ENCODE measurements at regions of chr5 and their contacts with region 1.

Region 1: GRCh38 chr5:40171971-40172370 is 507.7 kb upstream of the PTGER4 start:
- DNase-seq: peak; percentile 94
- ATAC-seq: peak; percentile 84
- H3K4me3 ChIP-seq: no peak overlapping the region
- H3K27ac ChIP-seq: peak overlapping the region; percentile 74
- H3K4me1 ChIP-seq: peaks cover 23% of the 10 kb centered on the region
- H3K27me3 ChIP-seq: no peaks in the 10 kb centered on the region
- CTCF ChIP-seq: no peak

Region 2: DNA sequence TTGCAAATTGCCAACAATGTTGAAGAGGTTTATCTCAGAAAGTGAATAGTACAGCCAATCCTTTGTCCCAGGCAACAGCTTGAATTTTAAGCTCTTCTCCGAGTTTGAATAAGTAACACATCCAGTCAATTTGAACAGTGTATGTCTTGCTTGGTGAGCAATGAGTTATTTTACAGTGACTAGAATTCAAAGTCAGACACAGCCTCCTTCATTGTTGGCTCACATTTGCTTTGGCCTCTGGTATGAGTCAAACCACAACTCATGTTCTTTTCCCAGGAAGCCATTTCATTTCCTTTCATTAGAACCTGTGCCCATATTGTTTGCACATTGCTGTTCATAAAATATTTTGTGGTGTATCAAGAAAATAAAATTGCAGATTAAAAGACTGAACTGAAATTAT is 125.2 kb before region 1 on chr5:
- CTCF ChIA-PET with region 1: no interaction called
- POLR2A ChIA-PET with region 1: no interaction called
- intact Hi-C with region 1: loop called (anchors 5 kb)
- DNase-seq: peak; percentile 93
- ATAC-seq: peak; percentile 92
- H3K4me3 ChIP-seq: 0 out of 2 replicates have a peak overlapping the region, but pooled peaks have one; percentile 2
- H3K27ac ChIP-seq: peak overlapping the region; percentile 93
- H3K4me1 ChIP-seq: peaks cover 30% of the 10 kb centered on the region
- H3K27me3 ChIP-seq: no peaks in the 10 kb centered on the region
- CTCF ChIP-seq: no peak

Region 3: DNA sequence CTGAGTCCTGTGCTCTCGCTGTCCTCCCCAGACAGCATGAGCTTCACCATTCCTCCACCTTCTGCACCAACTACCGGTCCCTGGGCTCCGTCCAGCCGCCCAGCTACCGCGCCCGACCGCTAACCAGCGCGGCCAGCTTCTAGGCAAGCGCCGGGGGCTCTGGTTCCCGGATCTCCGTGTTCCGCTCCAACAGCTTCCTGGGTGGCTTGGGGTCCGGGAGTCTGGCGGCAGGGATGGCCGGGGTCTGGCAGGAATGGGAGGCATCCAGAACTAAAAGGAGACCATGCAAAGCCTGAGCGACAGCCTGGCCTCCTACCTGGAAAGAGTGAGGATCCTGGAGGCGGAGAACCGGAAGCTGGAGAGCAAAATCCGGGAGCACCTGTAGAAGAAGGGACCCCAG is 105.4 kb before region 1 on chr5:
- CTCF ChIA-PET with region 1: no interaction called
- POLR2A ChIA-PET with region 1: no interaction called
- intact Hi-C with region 1: no loop called
- DNase-seq: no peak
- ATAC-seq: no peak
- H3K4me3 ChIP-seq: no peak overlapping the region
- H3K27ac ChIP-seq: no peak overlapping the region
- H3K4me1 ChIP-seq: peaks cover 2% of the 10 kb centered on the region; the same call in 1 of the 2 replicates
- H3K27me3 ChIP-seq: no peaks in the 10 kb centered on the region
- CTCF ChIP-seq: no peak

Region 4: GRCh38 chr5:40124367-40124766 is 47.6 kb before region 1 on chr5:
- CTCF ChIA-PET with region 1: interaction called, 14 read pairs
- POLR2A ChIA-PET with region 1: no interaction called
- intact Hi-C with region 1: no loop called
- DNase-seq: peak; percentile 44
- ATAC-seq: no peak
- H3K4me3 ChIP-seq: no peak overlapping the region
- H3K27ac ChIP-seq: no peak overlapping the region
- H3K4me1 ChIP-seq: no peaks in the 10 kb centered on the region
- H3K27me3 ChIP-seq: no peaks in the 10 kb centered on the region
- CTCF ChIP-seq: no peak

Region 5: DNA sequence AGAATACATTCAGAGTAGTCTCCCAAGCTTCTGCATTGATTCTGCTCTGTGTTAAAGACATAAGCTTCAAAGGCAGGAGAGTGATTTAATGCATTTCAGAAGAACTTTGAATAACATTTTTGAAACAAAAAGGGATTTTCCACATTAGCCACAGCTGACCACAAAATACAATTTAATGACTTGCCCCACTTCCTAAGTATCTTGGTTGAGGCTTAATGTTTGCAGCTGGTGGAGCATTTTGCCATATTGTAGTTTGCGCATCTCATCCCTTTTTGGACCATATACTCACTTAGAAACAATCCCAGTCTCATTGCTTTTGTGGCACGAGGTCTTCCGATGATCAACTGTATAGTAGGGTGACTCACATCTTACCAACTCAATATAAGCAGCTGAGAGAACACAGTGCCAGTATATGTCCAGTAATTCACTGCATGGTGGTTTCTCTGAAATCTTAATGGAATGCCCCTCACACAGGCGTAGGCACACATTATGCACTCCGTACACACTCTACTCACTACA is 52.0 kb after region 1 on chr5:
- CTCF ChIA-PET with region 1: no interaction called
- POLR2A ChIA-PET with region 1: no interaction called
- intact Hi-C with region 1: loop called (anchors 5 kb)
- DNase-seq: peak; percentile 90
- ATAC-seq: peak; percentile 95
- H3K4me3 ChIP-seq: peak overlapping the region; percentile 38; the same call in 1 of the 2 replicates
- H3K27ac ChIP-seq: peak overlapping the region; percentile 92
- H3K4me1 ChIP-seq: peaks cover 32% of the 10 kb centered on the region
- H3K27me3 ChIP-seq: no peaks in the 10 kb centered on the region
- CTCF ChIP-seq: no peak

Region 6: GRCh38 chr5:40240111-40240510 is 68.1 kb after region 1 on chr5:
- CTCF ChIA-PET with region 1: no interaction called
- POLR2A ChIA-PET with region 1: no interaction called
- intact Hi-C with region 1: no loop called
- DNase-seq: peak; percentile 40
- ATAC-seq: no peak
- H3K4me3 ChIP-seq: no peak overlapping the region
- H3K27ac ChIP-seq: no peak overlapping the region
- H3K4me1 ChIP-seq: peaks cover 15% of the 10 kb centered on the region
- H3K27me3 ChIP-seq: no peaks in the 10 kb centered on the region
- CTCF ChIP-seq: no peak

Region 7: DNA sequence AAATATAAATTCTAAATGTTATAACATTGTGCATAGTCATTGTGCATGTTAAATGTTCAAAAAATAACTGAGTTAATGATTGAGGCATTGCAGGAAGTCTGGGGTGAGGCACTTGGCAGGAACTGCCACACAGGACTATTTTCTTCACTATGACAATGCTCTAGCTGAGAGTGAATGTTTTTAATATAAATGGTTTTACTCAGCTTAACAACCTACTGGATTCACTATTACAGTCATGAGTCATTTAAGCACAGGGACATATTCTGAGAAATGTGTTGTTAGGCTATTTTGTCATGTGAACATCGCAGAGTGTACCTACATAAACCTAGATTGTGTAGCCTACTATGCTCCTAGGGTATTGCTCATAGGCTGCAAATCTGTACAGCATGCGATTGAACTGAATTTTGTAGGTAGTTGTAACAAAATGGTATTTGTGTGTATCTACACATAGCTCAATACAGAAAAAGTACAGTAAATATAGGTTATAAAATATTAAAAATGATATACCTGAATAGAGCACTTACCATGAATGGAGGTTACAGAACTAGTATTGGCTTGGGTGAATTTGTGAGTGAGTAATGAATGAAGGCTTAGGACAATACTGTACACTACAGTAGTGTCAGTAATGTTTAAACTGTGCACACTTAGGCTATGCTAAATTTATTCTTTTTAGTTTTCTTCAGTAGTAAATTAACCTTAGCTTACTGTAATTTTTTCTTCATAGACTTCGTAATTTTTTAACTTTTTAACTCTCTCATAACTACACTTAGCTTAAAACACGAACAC is 161.7 kb after region 1 on chr5:
- CTCF ChIA-PET with region 1: no interaction called
- POLR2A ChIA-PET with region 1: no interaction called
- intact Hi-C with region 1: loop called (anchors 5 kb)
- DNase-seq: peak; percentile 85
- ATAC-seq: peak; percentile 91
- H3K4me3 ChIP-seq: peak overlapping the region; percentile 1; the same call in 1 of the 2 replicates
- H3K27ac ChIP-seq: peak overlapping the region; percentile 79
- H3K4me1 ChIP-seq: peaks cover 20% of the 10 kb centered on the region
- H3K27me3 ChIP-seq: no peaks in the 10 kb centered on the region
- CTCF ChIP-seq: no peak

Region 8: DNA sequence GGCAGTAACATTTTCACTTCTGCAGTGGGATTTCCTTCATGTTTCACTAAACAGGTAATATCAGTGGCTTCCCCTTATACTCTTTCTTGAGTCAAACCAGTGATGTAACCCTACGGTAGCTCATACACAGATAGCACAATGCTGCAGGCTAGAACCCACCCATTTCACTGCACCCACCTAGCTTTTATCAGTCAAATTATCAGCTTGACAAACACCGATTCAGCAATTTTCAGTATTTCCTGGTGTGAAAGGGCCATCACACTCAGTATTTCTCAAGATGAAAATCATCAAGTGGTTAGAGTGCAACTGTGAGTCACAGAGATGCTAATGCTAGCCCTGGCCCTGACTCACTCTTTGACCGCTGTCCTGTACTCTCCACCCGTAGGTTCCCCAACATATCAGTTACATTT is 265.5 kb after region 1 on chr5:
- CTCF ChIA-PET with region 1: no interaction called
- POLR2A ChIA-PET with region 1: no interaction called
- intact Hi-C with region 1: no loop called
- DNase-seq: peak; percentile 92
- ATAC-seq: peak; percentile 100
- H3K4me3 ChIP-seq: no peak overlapping the region
- H3K27ac ChIP-seq: peak overlapping the region; percentile 55
- H3K4me1 ChIP-seq: peaks cover 19% of the 10 kb centered on the region
- H3K27me3 ChIP-seq: no peaks in the 10 kb centered on the region
- CTCF ChIP-seq: no peak

Measured in PC-3 (cell line).